ENCODE measurements at regions of chr5 and their contacts with region 1.

Region 1: DNA sequence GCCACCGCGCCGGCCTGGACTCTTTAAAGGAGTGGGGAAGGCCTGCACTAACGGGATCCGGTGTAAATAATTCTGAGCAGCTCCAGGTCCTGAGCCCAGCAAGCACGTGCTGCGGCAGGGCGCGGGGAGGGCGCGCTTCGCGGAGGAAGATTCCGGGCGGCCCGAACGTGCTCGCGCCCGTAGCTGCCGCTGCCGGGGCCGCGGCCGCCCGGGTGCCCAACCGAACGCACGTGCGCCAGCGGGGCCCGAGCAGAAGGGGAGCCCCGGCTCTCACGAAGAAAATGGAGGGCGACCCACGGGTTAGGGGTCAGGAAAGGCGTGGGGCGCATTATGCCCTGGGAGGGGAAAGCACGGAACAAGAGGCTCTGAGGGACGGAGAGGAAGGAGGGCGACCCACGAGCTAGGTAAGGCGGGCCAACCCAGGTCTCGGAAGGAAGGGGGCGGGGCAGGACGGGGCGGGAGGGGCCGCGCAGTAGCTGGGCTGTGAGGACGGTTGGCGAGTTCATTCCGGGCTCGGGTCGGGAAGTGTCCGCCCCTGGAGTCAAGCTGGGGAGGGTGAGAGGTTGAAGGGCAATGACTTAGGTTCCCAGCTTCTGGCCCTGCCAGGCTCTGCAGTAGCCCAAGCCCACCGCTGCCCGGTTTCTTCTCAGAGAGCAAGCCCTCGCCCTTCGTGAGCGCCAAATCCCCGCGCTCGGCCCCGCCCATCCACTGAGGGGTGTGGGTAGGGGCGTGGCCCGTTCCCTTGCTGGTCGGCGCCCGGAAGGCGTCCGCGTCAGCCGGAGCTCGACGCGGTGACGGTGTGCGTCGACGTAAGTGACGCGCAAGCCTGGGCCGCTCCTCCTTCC is at the start of gene ZNF131:
- DNase-seq: peak; percentile 98
- ATAC-seq: peak; percentile 93
- H3K4me3 Mint-ChIP-seq: peak within 1 kb of the TSS; percentile 94
- H3K27ac Mint-ChIP-seq: peak within 1 kb of the TSS; percentile 94
- H3K4me1 Mint-ChIP-seq: peaks cover 35% of the 10 kb centered on the region
- H3K27me3 Mint-ChIP-seq: no peaks in the 10 kb centered on the region
- total RNA-seq, gene ZNF131: 30.9 to 33.4 TPM

Region 2: DNA sequence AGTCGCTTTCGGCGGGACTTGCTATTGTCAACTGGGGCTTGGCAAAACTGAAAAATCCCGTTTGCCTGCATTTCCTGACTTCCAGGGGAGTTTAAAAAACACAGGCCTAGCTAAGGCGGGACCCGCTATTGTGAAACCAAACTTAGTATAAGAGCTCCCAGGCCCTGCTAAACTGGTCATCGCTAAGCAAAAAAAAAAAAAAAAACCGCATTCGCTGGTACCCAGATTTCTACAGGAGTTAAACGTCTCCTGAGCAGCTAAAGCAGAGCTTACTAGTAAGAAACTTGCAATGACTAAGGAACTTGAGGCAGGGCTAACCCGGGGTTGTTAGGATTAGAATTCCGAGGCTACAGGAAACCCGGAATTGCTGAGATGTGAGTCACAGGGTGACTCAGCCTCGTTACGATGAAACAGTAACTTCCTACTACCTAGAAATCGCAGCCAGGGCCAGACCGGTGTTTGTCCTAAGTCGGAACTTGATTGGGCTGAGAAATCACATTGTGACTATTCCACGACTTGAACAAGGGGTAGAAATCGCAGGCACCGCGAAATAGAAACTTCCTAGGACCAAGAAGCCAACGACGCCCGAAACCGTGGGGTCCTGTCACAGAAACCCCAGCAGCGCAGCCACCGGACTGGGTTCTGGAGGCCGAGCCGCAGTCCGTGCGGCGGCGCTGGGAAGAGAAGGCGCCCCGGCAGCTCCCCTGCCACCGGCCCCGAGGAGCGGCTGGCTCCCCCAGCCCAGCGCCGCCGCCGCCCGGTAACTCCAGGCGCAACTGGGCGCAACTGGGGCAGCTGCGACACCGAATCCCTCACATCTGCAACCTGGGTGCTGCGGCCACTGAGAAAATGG is 170.3 kb before region 1 on chr5:
- CTCF ChIA-PET with region 1: interaction called, 3 read pairs
- POLR2A ChIA-PET with region 1: interaction called, 4 read pairs
- intact Hi-C with region 1: loop called in 1 of 2 experiments (anchors 5 kb)
- DNase-seq: peak; percentile 82
- ATAC-seq: peak; percentile 59
- H3K4me3 Mint-ChIP-seq: peak overlapping the region; percentile 83
- H3K27ac Mint-ChIP-seq: peak overlapping the region; percentile 91
- H3K4me1 Mint-ChIP-seq: peaks cover 17% of the 10 kb centered on the region
- H3K27me3 Mint-ChIP-seq: no peaks in the 10 kb centered on the region

Region 3: DNA sequence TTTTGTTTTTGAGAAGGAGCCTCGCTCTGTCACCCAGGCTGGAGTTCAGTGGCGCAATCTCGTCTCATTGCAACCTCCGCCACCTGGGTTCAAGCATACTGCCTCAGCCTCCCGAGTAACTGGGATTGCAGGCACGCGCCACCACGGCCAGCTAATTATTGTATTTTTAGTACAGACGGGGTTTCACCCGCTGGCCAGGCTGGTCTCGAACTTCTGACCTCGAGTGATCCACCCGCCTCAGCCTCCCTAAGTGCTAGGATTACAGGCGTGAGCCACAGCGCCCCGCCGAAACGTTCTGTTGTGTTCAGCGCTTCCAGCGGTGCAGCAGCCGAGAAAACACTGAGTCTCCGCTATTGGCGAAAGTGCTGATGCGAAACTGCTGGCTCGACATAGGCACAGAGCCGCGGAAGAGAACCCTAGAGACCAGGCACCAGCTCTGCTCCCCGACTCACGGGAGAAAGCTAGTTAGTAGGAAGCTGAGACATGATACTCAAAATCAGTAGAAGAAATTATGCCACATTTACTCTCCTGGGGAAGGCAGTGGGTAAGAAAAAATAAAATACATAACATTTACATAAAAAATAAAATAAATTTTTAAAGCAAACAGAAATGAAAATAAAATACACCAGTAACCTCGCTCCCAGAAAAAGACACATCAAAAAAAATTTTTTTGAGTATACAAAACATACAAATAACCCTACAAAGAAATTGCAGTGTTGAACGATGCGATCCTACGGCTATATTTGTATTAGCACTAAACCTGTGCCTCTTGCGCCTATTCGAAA is 112.4 kb before region 1 on chr5:
- CTCF ChIA-PET with region 1: no interaction called
- POLR2A ChIA-PET with region 1: no interaction called
- intact Hi-C with region 1: loop called (anchors 2 to 5 kb)
- DNase-seq: peak; percentile 94
- ATAC-seq: peak; percentile 64
- H3K4me3 Mint-ChIP-seq: peak overlapping the region; percentile 76
- H3K27ac Mint-ChIP-seq: peak overlapping the region; percentile 94
- H3K4me1 Mint-ChIP-seq: peaks cover 21% of the 10 kb centered on the region
- H3K27me3 Mint-ChIP-seq: no peaks in the 10 kb centered on the region

Region 4: GRCh38 chr5:43066799-43067741 is 53.9 kb before region 1 on chr5:
- CTCF ChIA-PET with region 1: interaction called, 6 read pairs
- POLR2A ChIA-PET with region 1: no interaction called
- intact Hi-C with region 1: loop called (anchors 1 kb)
- DNase-seq: peak; percentile 91
- ATAC-seq: peak; percentile 51
- H3K4me3 Mint-ChIP-seq: peak overlapping the region; percentile 97
- H3K27ac Mint-ChIP-seq: peak overlapping the region; percentile 99
- H3K4me1 Mint-ChIP-seq: peaks cover 37% of the 10 kb centered on the region
- H3K27me3 Mint-ChIP-seq: no peaks in the 10 kb centered on the region

Region 5: DNA sequence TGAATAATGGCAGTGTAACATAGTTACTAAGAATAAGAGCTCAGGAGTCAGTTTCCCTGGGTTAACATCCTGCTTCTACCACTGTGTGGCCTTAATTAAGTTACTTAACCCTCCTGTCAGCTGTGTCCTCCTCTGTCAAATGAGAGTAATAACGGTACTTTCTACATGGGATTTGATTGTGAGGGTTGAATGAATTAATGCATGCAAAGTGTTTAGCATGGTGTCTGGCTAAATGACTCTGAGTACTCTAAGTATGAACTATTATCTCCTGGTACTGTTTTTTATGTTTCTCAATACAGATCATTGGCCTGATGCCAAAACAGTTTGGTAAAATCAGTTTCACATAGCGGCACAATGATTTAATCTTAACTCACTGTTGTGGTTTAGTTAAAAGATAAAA is 19.3 kb after region 1 on chr5:
- CTCF ChIA-PET with region 1: interaction called, 11 read pairs
- POLR2A ChIA-PET with region 1: interaction called, 10 read pairs
- intact Hi-C with region 1: no loop called
- DNase-seq: no peak
- ATAC-seq: peak; percentile 89
- H3K4me3 Mint-ChIP-seq: no peak overlapping the region
- H3K27ac Mint-ChIP-seq: peak overlapping the region; percentile 31
- H3K4me1 Mint-ChIP-seq: peaks cover 42% of the 10 kb centered on the region
- H3K27me3 Mint-ChIP-seq: no peaks in the 10 kb centered on the region

Region 6: GRCh38 chr5:43514816-43515677 is 394.1 kb after region 1 on chr5 and contains the start of gene C5orf34:
- CTCF ChIA-PET with region 1: interaction called, 3 read pairs
- POLR2A ChIA-PET with region 1: interaction called, 4 read pairs
- intact Hi-C with region 1: loop called in 1 of 2 experiments (anchors 1 kb)
- DNase-seq: peak; percentile 97
- ATAC-seq: peak; percentile 93
- H3K4me3 Mint-ChIP-seq: peak within 1 kb of the TSS; percentile 89
- H3K27ac Mint-ChIP-seq: peak within 1 kb of the TSS; percentile 99
- H3K4me1 Mint-ChIP-seq: peaks cover 23% of the 10 kb centered on the region
- H3K27me3 Mint-ChIP-seq: no peaks in the 10 kb centered on the region
- total RNA-seq, gene C5orf34: 14.4 to 16.8 TPM

Region 7: DNA sequence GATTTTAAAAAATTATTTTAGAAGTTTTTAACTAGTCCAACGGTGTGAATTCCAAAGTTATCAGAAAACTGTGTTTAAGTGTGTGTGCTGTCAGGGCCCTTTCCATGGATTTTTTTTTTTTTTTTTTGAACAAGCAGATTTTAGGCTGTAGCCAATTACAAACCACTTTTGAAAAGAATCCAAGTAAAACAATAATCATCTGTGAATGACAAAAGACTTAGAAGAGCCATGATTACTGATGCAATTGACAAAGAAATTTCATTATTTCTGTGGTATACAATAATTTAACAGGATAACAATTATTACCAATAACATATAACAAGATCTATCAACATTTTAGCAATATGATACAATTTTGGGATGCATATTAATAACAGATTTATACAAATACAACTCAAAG is 452.1 kb after region 1 on chr5:
- CTCF ChIA-PET with region 1: no interaction called
- POLR2A ChIA-PET with region 1: no interaction called
- intact Hi-C with region 1: no loop called
- DNase-seq: no peak
- ATAC-seq: no peak
- H3K4me3 Mint-ChIP-seq: no peak overlapping the region
- H3K27ac Mint-ChIP-seq: no peak overlapping the region
- H3K4me1 Mint-ChIP-seq: peaks cover under 1% of the 10 kb centered on the region
- H3K27me3 Mint-ChIP-seq: no peaks in the 10 kb centered on the region

Measured in activated CD4-positive, alpha-beta T cell treated with anti-CD3 and anti-CD28 coated beads for 36 hours (primary cell).